CD4-positive, alpha-beta T cell (primary cell): ENCODE measurements at regions of chr11 and their contacts with region 1.

Region 1: GRCh38 chr11:6682936-6683861 is at the start of gene MRPL17:
- DNase-seq: peak; percentile 96 to 100 (median 99)
- ATAC-seq: peak; percentile 94
- H3K4me3 ChIP-seq: peak within 1 kb of the TSS; percentile 75
- H3K4me3 Mint-ChIP-seq: peak within 1 kb of the TSS; percentile 98
- H3K27ac ChIP-seq: peak within 1 kb of the TSS; percentile 76 to 86
- H3K27ac Mint-ChIP-seq: peak within 1 kb of the TSS; percentile 94
- H3K4me1 ChIP-seq: peaks cover 17% of the 10 kb centered on the region
- H3K4me1 Mint-ChIP-seq: peaks cover 43% of the 10 kb centered on the region
- H3K27me3 ChIP-seq: no peaks in the 10 kb centered on the region
- H3K27me3 Mint-ChIP-seq: no peaks in the 10 kb centered on the region
- CTCF ChIP-seq: peak; percentile 78
- total RNA-seq, gene MRPL17: 12.3 to 14.2 TPM

Region 2: DNA sequence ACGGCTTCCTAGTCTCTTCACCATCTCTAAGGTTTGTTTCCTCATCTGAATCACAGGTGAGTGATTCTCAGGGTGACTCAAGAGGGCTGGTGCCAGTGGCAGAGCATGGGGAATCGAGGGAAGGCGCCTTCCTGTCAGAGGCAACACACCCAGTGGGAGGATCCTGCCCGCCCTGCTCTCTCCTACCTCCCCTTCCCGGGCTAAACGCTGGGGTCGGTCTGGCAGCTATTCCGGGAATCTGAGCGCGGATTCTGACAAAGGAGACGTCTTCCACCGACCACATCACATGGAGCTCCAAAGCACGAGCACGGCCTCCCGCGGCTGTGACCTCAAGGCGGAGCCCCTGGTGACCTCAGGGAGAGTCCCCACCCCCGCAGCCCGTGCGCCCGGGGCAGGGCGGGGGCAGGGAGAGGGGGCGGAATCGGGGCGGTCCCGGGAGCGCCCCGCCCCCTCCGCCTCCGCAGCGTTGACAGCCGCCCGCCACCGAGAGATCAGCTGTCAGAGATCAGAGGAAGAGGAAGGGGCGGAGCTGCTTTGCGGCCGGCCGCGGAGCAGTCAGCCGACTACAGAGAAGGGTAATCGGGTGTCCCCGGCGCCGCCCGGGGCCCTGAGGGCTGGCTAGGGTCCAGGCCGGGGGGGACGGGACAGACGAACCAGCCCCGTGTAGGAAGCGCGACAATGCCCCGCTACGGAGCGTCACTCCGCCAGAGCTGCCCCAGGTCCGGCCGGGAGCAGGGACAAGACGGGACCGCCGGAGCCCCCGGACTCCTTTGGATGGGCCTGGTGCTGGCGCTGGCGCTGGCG is 293.1 kb before region 1 on chr11 and contains the start of gene SMPD1:
- CTCF ChIA-PET with region 1: interaction called, 5 read pairs
- POLR2A ChIA-PET with region 1: no interaction called
- intact Hi-C with region 1: loop called in 1 of 2 experiments (anchors 10 kb)
- DNase-seq: peak; percentile 85 to 98 (median 94)
- ATAC-seq: peak; percentile 82
- H3K4me3 ChIP-seq: peak within 1 kb of the TSS; percentile 95
- H3K4me3 Mint-ChIP-seq: peak within 1 kb of the TSS; percentile 90
- H3K27ac ChIP-seq: peak within 1 kb of the TSS; percentile 87 to 93
- H3K27ac Mint-ChIP-seq: peak within 1 kb of the TSS; percentile 93
- H3K4me1 ChIP-seq: peaks cover 54% of the 10 kb centered on the region
- H3K4me1 Mint-ChIP-seq: peaks cover 75% of the 10 kb centered on the region
- H3K27me3 ChIP-seq: no peaks in the 10 kb centered on the region
- H3K27me3 Mint-ChIP-seq: no peaks in the 10 kb centered on the region
- CTCF ChIP-seq: no peak
- total RNA-seq, gene SMPD1: 70.9 to 75.0 TPM

Region 3: GRCh38 chr11:6481012-6481923 is 201.9 kb before region 1 on chr11 and contains the starts of genes ARFIP2 and TIMM10B:
- CTCF ChIA-PET with region 1: interaction called, 6 read pairs
- POLR2A ChIA-PET with region 1: interaction called, 17 read pairs
- intact Hi-C with region 1: loop called (anchors 1 to 5 kb)
- DNase-seq: peak; percentile 92 to 99 (median 96)
- ATAC-seq: peak; percentile 94
- H3K4me3 ChIP-seq: peak within 1 kb of the TSS; percentile 83
- H3K4me3 Mint-ChIP-seq: peak within 1 kb of the TSS; percentile 98
- H3K27ac ChIP-seq: peak within 1 kb of the TSS; percentile 87 to 95
- H3K27ac Mint-ChIP-seq: peak within 1 kb of the TSS; percentile 99
- H3K4me1 ChIP-seq: peaks cover 39% of the 10 kb centered on the region
- H3K4me1 Mint-ChIP-seq: peaks cover 42% of the 10 kb centered on the region
- H3K27me3 ChIP-seq: no peaks in the 10 kb centered on the region
- H3K27me3 Mint-ChIP-seq: no peaks in the 10 kb centered on the region
- CTCF ChIP-seq: no peak
- total RNA-seq, gene ARFIP2: 78.1 to 80.5 TPM
- total RNA-seq, gene TIMM10B: 68.5 to 68.6 TPM

Region 4: GRCh38 chr11:6603287-6604080 is 79.7 kb before region 1 on chr11 and contains the starts of genes ILK and RRP8:
- CTCF ChIA-PET with region 1: interaction called, 33 read pairs
- POLR2A ChIA-PET with region 1: interaction called, 57 read pairs
- intact Hi-C with region 1: loop called in 1 of 2 experiments (anchors 1 kb)
- DNase-seq: peak; percentile 73 to 94 (median 83)
- ATAC-seq: peak; percentile 75
- H3K4me3 ChIP-seq: peak within 1 kb of the TSS; percentile 78
- H3K4me3 Mint-ChIP-seq: no peak within 1 kb of the TSS
- H3K27ac ChIP-seq: peak within 1 kb of the TSS; percentile 81 to 87
- H3K27ac Mint-ChIP-seq: no peak within 1 kb of the TSS
- H3K4me1 ChIP-seq: peaks cover 73% of the 10 kb centered on the region
- H3K4me1 Mint-ChIP-seq: peaks cover 22% of the 10 kb centered on the region
- H3K27me3 ChIP-seq: no peaks in the 10 kb centered on the region
- H3K27me3 Mint-ChIP-seq: no peaks in the 10 kb centered on the region
- CTCF ChIP-seq: no peak
- total RNA-seq, gene ILK: 19.2 to 21.0 TPM
- total RNA-seq, gene RRP8: 25.7 to 27.3 TPM

Region 5: DNA sequence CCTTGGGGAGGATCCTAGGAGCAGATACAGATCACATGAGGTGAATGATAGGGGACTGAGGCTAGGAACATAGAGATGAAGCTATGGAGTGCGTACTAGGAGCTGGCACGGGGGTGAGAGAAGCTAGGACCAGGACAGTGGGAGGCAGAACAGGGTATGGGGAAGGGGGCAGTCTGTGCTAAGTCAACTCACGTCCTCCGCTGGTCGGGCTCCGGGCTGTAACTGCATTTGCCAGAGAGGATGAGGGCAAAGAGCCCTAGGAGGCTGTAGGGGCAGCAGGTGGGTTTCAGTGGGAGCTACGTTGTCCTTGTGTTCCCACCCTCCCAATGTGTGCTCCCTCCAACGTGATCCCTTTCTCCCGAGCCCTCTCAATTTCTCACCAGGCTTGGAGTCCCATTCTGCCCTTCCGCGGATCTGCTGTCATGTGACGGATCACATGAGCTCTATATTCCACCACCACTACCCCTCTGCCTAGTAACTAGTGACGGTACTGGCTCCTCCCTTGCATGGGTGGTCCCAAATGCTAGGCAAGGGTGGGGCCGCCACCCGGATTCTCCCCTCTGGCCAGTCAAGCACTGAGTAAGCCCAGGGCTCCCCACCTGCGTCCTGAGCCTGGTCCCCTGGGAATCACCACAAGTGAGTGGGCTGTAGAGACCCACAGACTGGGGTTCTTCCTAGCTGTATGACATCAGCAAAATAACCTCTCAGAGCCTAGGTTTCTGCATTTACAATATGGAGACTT is 64.0 kb before region 1 on chr11 and contains the start of gene TPP1:
- CTCF ChIA-PET with region 1: interaction called, 30 read pairs
- POLR2A ChIA-PET with region 1: interaction called, 134 read pairs
- intact Hi-C with region 1: loop called in 1 of 2 experiments (anchors 1 kb)
- DNase-seq: peak; percentile 73 to 96 (median 84)
- ATAC-seq: peak; percentile 92
- H3K4me3 ChIP-seq: peak within 1 kb of the TSS; percentile 85
- H3K4me3 Mint-ChIP-seq: no peak within 1 kb of the TSS
- H3K27ac ChIP-seq: peak within 1 kb of the TSS; percentile 73 to 94
- H3K27ac Mint-ChIP-seq: no peak within 1 kb of the TSS
- H3K4me1 ChIP-seq: peaks cover 30% of the 10 kb centered on the region
- H3K4me1 Mint-ChIP-seq: peaks cover 8% of the 10 kb centered on the region
- H3K27me3 ChIP-seq: no peaks in the 10 kb centered on the region
- H3K27me3 Mint-ChIP-seq: no peaks in the 10 kb centered on the region
- CTCF ChIP-seq: no peak
- total RNA-seq, gene TPP1: 29.7 to 34.4 TPM

Region 6: GRCh38 chr11:6667733-6668374 is 15.3 kb before region 1 on chr11:
- CTCF ChIA-PET with region 1: interaction called, 19 read pairs
- POLR2A ChIA-PET with region 1: interaction called, 30 read pairs
- intact Hi-C with region 1: no loop called
- DNase-seq: peak in 6 of 14 experiments; percentile 12 to 82 (median 58)
- ATAC-seq: peak; percentile 80
- H3K4me3 ChIP-seq: no peak overlapping the region
- H3K4me3 Mint-ChIP-seq: no peak overlapping the region
- H3K27ac ChIP-seq: peak overlapping the region in 1 of 2 donors; percentile 35
- H3K27ac Mint-ChIP-seq: peak overlapping the region; percentile 41
- H3K4me1 ChIP-seq: peaks cover 32% of the 10 kb centered on the region
- H3K4me1 Mint-ChIP-seq: peaks cover 52% of the 10 kb centered on the region
- H3K27me3 ChIP-seq: no peaks in the 10 kb centered on the region
- H3K27me3 Mint-ChIP-seq: no peaks in the 10 kb centered on the region
- CTCF ChIP-seq: peak; percentile 67

Region 7: GRCh38 chr11:6705905-6706535 is 22.8 kb after region 1 on chr11:
- CTCF ChIA-PET with region 1: interaction called, 8 read pairs
- POLR2A ChIA-PET with region 1: interaction called, 7 read pairs
- intact Hi-C with region 1: loop called in 1 of 2 experiments (anchors 2 kb)
- DNase-seq: peak in 11 of 14 experiments; percentile 11 to 72 (median 21)
- ATAC-seq: peak; percentile 88
- H3K4me3 ChIP-seq: no peak overlapping the region
- H3K4me3 Mint-ChIP-seq: no peak overlapping the region
- H3K27ac ChIP-seq: no peak overlapping the region
- H3K27ac Mint-ChIP-seq: peak overlapping the region; percentile 78
- H3K4me1 ChIP-seq: no peaks in the 10 kb centered on the region
- H3K4me1 Mint-ChIP-seq: peaks cover 30% of the 10 kb centered on the region
- H3K27me3 ChIP-seq: no peaks in the 10 kb centered on the region
- H3K27me3 Mint-ChIP-seq: no peaks in the 10 kb centered on the region
- CTCF ChIP-seq: peak; percentile 99

Region 8: GRCh38 chr11:6790546-6790945 is 107.3 kb after region 1 on chr11:
- CTCF ChIA-PET with region 1: no interaction called
- POLR2A ChIA-PET with region 1: no interaction called
- intact Hi-C with region 1: no loop called
- DNase-seq: no peak
- ATAC-seq: no peak
- H3K4me3 ChIP-seq: no peak overlapping the region
- H3K4me3 Mint-ChIP-seq: no peak overlapping the region
- H3K27ac ChIP-seq: no peak overlapping the region
- H3K27ac Mint-ChIP-seq: no peak overlapping the region
- H3K4me1 ChIP-seq: no peaks in the 10 kb centered on the region
- H3K4me1 Mint-ChIP-seq: no peaks in the 10 kb centered on the region
- H3K27me3 ChIP-seq: peaks cover 0 to 3% of the 10 kb centered on the region in 2 experiments
- H3K27me3 Mint-ChIP-seq: peaks cover 16% of the 10 kb centered on the region
- CTCF ChIP-seq: no peak